ENCODE measurements at regions of chr11 and their contacts with region 1.

Region 1: GRCh38 chr11:58530236-58530635 is 22.3 kb upstream of the OR5B21 start:
- DNase-seq: peak; percentile 19
- H3K4me3 Mint-ChIP-seq: no peak overlapping the region
- H3K27ac Mint-ChIP-seq: no peak overlapping the region
- H3K4me1 Mint-ChIP-seq: peaks cover 48% of the 10 kb centered on the region
- H3K27me3 Mint-ChIP-seq: no peaks in the 10 kb centered on the region

Region 2: GRCh38 chr11:58567889-58568512 is 37.8 kb after region 1 on chr11:
- CTCF ChIA-PET with region 1: interaction called, 31 read pairs
- intact Hi-C with region 1: loop called (anchors 1 kb)
- DNase-seq: peak; percentile 83
- H3K4me3 Mint-ChIP-seq: peak overlapping the region; percentile 0
- H3K27ac Mint-ChIP-seq: peak overlapping the region; percentile 67
- H3K4me1 Mint-ChIP-seq: peaks cover 63% of the 10 kb centered on the region
- H3K27me3 Mint-ChIP-seq: no peaks in the 10 kb centered on the region